GM12878 (cell line): ENCODE measurements at regions of chr19 and their contacts with region 1.

Region 1: DNA sequence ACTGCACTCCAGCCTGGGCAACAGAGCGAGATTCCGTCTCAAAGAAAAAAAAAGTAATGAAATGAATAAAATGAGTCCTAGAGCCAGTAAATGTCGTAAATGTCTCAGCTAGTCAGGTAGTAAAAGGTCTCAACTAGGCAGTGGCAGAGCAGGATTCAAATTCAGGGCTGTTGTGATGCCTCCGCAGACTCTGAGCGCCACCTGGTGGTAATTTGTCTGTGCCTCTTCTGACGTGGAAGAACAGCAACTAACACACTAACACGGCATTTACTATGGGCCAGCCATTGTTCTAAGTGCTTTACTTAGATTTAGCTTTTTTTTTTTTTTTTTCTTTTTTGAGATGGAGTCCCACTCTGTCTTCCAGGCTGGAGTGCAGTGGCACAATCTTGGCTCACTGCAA is 30.2 kb downstream of the CYP2F1 start:
- DNase-seq: peak; percentile 11
- ATAC-seq: peak; percentile 90
- H3K4me3 ChIP-seq: no peak overlapping the region
- H3K27ac ChIP-seq: no peak overlapping the region
- H3K4me1 ChIP-seq: no peaks in the 10 kb centered on the region
- H3K27me3 ChIP-seq: no peaks in the 10 kb centered on the region
- CTCF ChIP-seq: peak; percentile 75 to 86 (median 78)
- EP300 ChIP-seq: no peak
- POLR2A ChIP-seq: no peak
- RAD21 ChIP-seq: peak; percentile 69

Region 2: DNA sequence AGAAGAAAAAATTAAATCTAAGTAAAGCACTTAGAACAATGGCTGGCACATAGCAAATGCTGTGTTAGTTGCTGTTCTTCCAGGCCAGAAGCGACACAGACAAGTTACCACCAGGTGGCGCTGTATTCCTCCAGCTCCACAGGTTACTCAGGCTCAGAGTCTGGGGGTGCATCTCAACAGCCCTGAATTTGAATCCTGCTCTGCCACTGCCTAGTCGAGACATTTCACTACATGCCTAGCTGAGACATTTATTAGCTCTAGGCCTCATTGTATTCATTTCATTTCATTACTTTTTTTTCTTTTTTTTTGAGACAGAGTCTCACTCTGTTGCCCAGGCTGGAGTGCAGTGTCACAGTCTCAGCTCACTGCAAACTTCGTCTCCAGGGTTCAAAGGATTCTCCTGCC is 169.8 kb before region 1 on chr19:
- CTCF ChIA-PET with region 1: interaction called, 19 read pairs
- POLR2A ChIA-PET with region 1: no interaction called
- RAD21 ChIA-PET with region 1: interaction called, 3 read pairs
- SMC1A ChIA-PET with region 1: interaction called, 4 read pairs
- in situ Hi-C with region 1: no loop called
- intact Hi-C with region 1: loop called (anchors 1 kb)
- DNase-seq: peak; percentile 3
- ATAC-seq: peak; percentile 89
- H3K4me3 ChIP-seq: no peak overlapping the region
- H3K27ac ChIP-seq: no peak overlapping the region
- H3K4me1 ChIP-seq: no peaks in the 10 kb centered on the region
- H3K27me3 ChIP-seq: no peaks in the 10 kb centered on the region
- CTCF ChIP-seq: peak; percentile 64 to 74 (median 73)
- EP300 ChIP-seq: no peak
- POLR2A ChIP-seq: no peak
- RAD21 ChIP-seq: peak; percentile 57

Region 3: DNA sequence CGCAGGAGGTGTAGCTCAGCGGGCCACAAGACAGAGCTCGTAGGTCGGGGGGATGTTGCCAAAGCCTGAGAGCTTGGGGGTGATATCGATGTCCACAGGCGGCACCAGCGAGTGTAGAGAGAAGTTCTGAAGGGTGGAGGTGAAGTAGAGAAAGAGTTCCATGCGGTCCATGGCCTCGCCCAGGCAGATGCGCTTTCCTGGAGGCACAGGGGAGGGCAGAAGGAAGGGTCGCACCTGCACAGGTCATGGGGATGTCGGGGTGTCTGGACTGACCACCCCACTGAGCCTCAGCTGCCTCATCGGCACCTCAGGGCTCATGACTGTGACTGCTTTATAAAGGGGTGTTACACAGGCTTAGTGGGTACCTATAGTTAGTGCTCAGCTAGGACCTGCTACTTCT is 94.0 kb before region 1 on chr19:
- CTCF ChIA-PET with region 1: no interaction called
- POLR2A ChIA-PET with region 1: no interaction called
- RAD21 ChIA-PET with region 1: no interaction called
- SMC1A ChIA-PET with region 1: no interaction called
- in situ Hi-C with region 1: no loop called
- intact Hi-C with region 1: no loop called
- DNase-seq: no peak
- ATAC-seq: no peak
- H3K4me3 ChIP-seq: no peak overlapping the region
- H3K27ac ChIP-seq: no peak overlapping the region
- H3K4me1 ChIP-seq: no peaks in the 10 kb centered on the region
- H3K27me3 ChIP-seq: no peaks in the 10 kb centered on the region; a peak in 1 of 4 replicates
- CTCF ChIP-seq: no peak
- EP300 ChIP-seq: no peak
- POLR2A ChIP-seq: no peak
- RAD21 ChIP-seq: no peak